ENCODE measurements at regions of chr5 and their contacts with region 1.

Region 1: DNA sequence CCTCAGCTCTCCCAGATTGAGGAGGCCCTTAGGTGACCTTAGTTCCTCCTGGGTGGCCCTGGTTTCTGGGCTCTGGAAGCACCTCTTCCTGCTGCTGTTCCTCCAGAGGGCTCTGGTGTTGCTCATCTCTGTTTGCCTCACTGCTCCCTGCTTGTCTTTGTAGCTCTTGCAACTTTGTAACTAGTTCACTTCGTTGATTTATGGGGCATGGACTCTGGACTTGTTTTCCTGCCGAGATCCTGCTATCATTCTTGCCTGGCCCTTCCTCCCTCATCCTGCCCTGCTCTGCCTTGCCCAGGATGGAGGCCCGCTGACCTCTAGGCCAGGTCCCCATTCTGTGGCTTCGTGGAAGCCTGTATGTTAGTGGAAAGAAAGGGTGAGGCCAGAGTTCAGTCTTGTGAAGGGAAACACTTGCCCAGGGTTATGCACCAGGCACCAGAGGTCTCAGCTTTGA is 169.3 kb downstream of the MACROH2A1 start:
- DNase-seq: no peak
- ATAC-seq: no peak
- H3K4me3 ChIP-seq: no peak overlapping the region
- H3K27ac ChIP-seq: peak overlapping the region; percentile 71
- H3K4me1 ChIP-seq: peaks cover 46% of the 10 kb centered on the region
- H3K27me3 ChIP-seq: no peaks in the 10 kb centered on the region
- CTCF ChIP-seq: no peak

Region 2: DNA sequence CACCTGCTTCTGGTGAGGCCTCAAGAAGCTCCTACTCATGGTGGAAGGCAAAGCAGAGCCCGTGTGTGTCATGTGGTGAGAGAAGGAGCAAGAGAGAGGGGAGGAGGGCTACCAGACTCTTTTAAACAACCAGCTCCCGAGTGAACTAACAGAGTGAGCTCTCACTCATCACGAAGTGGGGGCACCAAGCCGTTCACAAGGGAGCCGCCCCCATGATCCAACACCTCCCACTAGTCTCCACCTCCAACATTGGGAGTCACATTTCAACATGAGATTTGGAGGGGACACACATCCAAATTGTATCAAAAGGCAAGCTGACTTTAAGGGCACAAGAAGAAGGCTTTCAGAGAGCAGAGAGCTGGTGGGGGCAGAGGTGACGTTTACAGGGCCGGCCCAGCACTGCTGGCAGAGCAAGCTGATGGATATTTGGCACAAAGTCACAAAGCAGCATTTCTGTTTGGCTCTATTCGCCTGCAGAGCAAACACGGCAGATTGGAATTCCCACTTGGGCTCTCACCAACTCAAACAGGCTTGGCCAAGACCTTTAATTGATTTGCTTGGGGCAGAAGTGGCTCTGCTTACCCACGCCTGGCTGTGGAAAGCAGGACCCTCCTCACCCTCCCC is 215.6 kb before region 1 on chr5:
- intact Hi-C with region 1: no loop called
- DNase-seq: no peak
- ATAC-seq: peak in 1 of 4 donors; percentile 40
- H3K4me3 ChIP-seq: no peak overlapping the region
- H3K27ac ChIP-seq: no peak overlapping the region
- H3K4me1 ChIP-seq: no peaks in the 10 kb centered on the region
- H3K27me3 ChIP-seq: no peaks in the 10 kb centered on the region
- CTCF ChIP-seq: no peak

Region 3: DNA sequence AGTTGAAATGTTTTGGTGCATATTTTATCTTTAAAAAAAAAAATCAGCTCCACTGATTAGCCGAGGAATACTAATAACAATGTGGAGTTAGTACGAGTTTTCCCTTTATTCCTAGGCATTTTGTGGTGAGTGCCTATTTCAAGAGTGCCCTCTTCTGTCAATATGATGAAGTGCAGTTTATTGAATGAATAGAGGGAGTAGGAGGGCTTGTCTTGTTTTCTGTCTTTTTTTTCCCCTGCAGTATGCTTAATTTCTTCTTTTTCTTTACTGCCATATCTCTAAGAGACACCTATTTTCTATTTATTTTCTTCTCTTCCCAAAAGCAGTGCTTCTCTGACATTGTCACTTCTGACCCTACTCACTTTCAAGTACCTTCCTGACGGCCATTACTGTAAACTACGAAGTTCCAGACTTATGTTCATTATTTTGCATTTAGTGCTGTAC is 26.1 kb before region 1 on chr5:
- intact Hi-C with region 1: loop called in 1 of 2 experiments (anchors 1 kb)
- DNase-seq: no peak
- ATAC-seq: no peak
- H3K4me3 ChIP-seq: no peak overlapping the region
- H3K27ac ChIP-seq: no peak overlapping the region
- H3K4me1 ChIP-seq: no peaks in the 10 kb centered on the region
- H3K27me3 ChIP-seq: no peaks in the 10 kb centered on the region
- CTCF ChIP-seq: peak; percentile 33

Region 4: GRCh38 chr5:135310328-135310989 is 80.8 kb after region 1 on chr5:
- intact Hi-C with region 1: no loop called
- DNase-seq: no peak
- ATAC-seq: no peak
- H3K4me3 ChIP-seq: no peak overlapping the region
- H3K27ac ChIP-seq: no peak overlapping the region
- H3K4me1 ChIP-seq: no peaks in the 10 kb centered on the region
- H3K27me3 ChIP-seq: peaks cover 0 to 1% (median 0%) of the 10 kb centered on the region in 3 donors
- CTCF ChIP-seq: no peak

Measured in psoas muscle (tissue), 8 donors.